Thyroid gland (tissue), 4 donors: ENCODE measurements at regions of chr7 and their contacts with region 1.

Region 1: GRCh38 chr7:80134536-80135320 is at the start of gene GNAI1:
- DNase-seq: peak; percentile 85 to 88
- H3K4me3 ChIP-seq: peak within 1 kb of the TSS; percentile 81 to 92 (median 92)
- H3K27ac ChIP-seq: peak within 1 kb of the TSS; percentile 87 to 96 (median 94)
- H3K4me1 ChIP-seq: peaks cover 8 to 17% of the 10 kb centered on the region in 2 donors
- H3K27me3 ChIP-seq: no peaks in the 10 kb centered on the region
- CTCF ChIP-seq: peak in 3 of 6 experiments; percentile 60 to 68 (median 63)
- POLR2A ChIP-seq: peak; percentile 73 to 85
- total RNA-seq, gene GNAI1: 32.1 to 52.7 (median 47.4) TPM

Region 2: DNA sequence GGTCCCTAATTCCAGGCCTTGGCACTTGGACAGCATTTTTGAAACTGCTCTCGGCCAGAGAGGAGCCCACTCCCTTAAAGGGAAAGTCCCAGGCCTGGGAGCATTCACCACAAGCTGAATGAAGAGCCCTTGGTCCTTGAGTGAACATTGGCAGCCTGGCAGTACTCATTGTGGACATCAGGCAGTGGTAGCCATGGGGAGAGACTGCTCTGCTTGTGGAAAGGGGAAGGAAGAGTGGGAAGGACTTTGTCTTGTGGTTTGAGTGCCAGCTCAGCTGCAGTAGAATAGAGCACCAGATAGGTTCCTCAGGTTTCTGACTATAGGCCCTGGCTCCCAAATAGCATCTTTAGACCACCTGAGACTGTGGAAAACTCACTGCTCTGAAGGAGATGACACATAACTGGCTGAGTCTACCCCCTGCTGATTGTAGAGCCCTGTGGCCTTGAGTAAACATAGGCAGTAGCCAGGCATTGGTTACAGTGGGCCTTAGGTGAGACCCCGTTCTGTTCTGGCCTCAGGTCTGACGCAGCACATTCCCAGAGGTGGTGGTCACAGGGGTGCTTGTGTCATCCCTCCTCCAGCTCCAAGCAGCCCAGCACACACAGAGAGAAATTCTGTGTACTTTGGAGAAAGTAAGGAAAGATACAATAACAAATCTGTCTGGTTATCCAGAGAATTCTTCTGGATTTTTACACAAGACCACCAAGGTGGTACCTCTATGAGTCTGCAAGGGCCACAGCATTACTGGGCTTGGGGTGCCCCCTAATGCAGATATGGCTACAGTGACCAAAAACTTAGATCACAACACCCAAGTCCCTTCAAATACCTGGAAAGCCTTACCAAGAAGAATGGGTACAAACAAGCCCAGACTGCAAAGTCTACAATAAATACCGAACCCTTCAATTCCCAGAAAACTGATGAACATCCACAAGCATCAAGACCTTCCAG is 153.7 kb after region 1 on chr7:
- intact Hi-C with region 1: loop called (anchors 10 kb)
- DNase-seq: no peak
- H3K4me3 ChIP-seq: no peak overlapping the region
- H3K27ac ChIP-seq: no peak overlapping the region
- H3K4me1 ChIP-seq: no peaks in the 10 kb centered on the region
- H3K27me3 ChIP-seq: no peaks in the 10 kb centered on the region
- CTCF ChIP-seq: peak in 1 of 6 experiments; percentile 22
- POLR2A ChIP-seq: no peak

Region 3: GRCh38 chr7:81183326-81183725 is 1048.6 kb after region 1 on chr7:
- intact Hi-C with region 1: no loop called
- DNase-seq: no peak
- H3K4me3 ChIP-seq: no peak overlapping the region
- H3K27ac ChIP-seq: no peak overlapping the region
- H3K4me1 ChIP-seq: no peaks in the 10 kb centered on the region
- H3K27me3 ChIP-seq: no peaks in the 10 kb centered on the region
- CTCF ChIP-seq: no peak
- POLR2A ChIP-seq: no peak